Ascending aorta (tissue), 2 donors: ENCODE measurements at regions of chr19 and their contacts with region 1.

Region 1: DNA sequence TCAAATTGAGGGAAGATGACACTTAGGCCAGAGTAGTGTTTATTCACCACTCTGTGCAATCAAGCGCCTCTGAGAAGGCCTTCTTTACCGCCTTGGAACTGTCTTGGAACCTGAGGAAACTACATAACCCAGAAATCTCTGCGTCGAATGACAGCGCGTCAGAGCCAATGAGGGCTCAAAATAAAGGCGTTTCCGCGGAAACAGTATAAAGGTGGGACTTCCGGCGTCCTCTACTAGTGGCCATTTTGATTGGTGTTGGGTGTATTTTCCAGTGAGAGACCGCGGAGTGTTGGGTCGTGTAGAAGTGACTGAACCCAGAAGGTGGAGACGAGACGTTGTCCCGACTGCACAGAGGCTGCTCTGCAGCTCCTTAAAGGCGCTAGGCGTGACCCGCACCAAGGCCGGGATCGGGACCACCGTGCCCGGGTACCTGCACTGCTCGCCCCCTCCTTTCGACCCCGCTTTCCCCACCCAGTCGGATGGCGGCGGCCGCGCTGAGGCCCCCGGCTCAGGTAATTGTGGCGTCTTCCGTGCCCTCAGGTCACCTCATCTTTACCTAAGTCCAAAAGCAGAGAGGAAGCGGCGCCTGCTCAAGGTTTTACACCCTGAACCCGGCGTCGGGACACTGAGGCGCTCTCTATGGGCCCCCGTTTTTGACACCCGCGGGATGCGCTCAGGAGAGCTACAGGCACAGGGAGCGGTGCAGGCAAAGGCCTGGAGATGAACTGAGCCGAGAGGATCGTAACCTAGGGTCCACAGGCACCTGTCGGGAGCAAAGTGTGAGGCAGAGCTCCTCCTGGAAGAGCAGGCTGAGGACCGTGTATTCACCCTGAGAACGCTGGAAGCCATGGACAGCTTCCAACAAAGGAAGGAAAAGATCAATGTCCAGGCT is at the start of gene ZNF776:
- DNase-seq: peak; percentile 43 to 89
- H3K4me3 ChIP-seq: peak within 1 kb of the TSS; percentile 81 to 85
- H3K27ac ChIP-seq: peak within 1 kb of the TSS; percentile 55 to 63
- H3K4me1 ChIP-seq: no peaks in the 10 kb centered on the region
- H3K27me3 ChIP-seq: no peaks in the 10 kb centered on the region
- CTCF ChIP-seq: no peak
- total RNA-seq, gene ZNF776: 1.9 TPM

Region 2: GRCh38 chr19:57682226-57682766 is 64.5 kb before region 1 on chr19:
- intact Hi-C with region 1: loop called (anchors 5 kb)
- DNase-seq: no peak
- H3K4me3 ChIP-seq: peak overlapping the region; percentile 90 to 93
- H3K27ac ChIP-seq: no peak overlapping the region
- H3K4me1 ChIP-seq: peaks cover 6 to 14% of the 10 kb centered on the region in 2 donors
- H3K27me3 ChIP-seq: no peaks in the 10 kb centered on the region
- CTCF ChIP-seq: no peak

Region 3: GRCh38 chr19:57789288-57789687 is 42.5 kb after region 1 on chr19:
- intact Hi-C with region 1: no loop called
- DNase-seq: no peak
- H3K4me3 ChIP-seq: no peak overlapping the region
- H3K27ac ChIP-seq: no peak overlapping the region
- H3K4me1 ChIP-seq: no peaks in the 10 kb centered on the region
- H3K27me3 ChIP-seq: no peaks in the 10 kb centered on the region
- CTCF ChIP-seq: no peak

Region 4: GRCh38 chr19:57814505-57815251 is 67.9 kb after region 1 on chr19 and contains the start of gene ZNF552:
- intact Hi-C with region 1: loop called (anchors 5 kb)
- DNase-seq: peak; percentile 70 to 93
- H3K4me3 ChIP-seq: peak within 1 kb of the TSS; percentile 85 to 87
- H3K27ac ChIP-seq: peak within 1 kb of the TSS; percentile 71 to 75
- H3K4me1 ChIP-seq: peaks cover 2 to 8% of the 10 kb centered on the region in 2 donors
- H3K27me3 ChIP-seq: no peaks in the 10 kb centered on the region
- CTCF ChIP-seq: no peak
- total RNA-seq, gene ZNF552: 6.9 TPM

Region 5: GRCh38 chr19:58009666-58010371 is 263.0 kb after region 1 on chr19:
- intact Hi-C with region 1: no loop called
- DNase-seq: peak in 1 of 2 donors; percentile 83
- H3K4me3 ChIP-seq: peak overlapping the region; percentile 26 to 36
- H3K27ac ChIP-seq: no peak overlapping the region
- H3K4me1 ChIP-seq: no peaks in the 10 kb centered on the region
- H3K27me3 ChIP-seq: no peaks in the 10 kb centered on the region
- CTCF ChIP-seq: no peak

Region 6: DNA sequence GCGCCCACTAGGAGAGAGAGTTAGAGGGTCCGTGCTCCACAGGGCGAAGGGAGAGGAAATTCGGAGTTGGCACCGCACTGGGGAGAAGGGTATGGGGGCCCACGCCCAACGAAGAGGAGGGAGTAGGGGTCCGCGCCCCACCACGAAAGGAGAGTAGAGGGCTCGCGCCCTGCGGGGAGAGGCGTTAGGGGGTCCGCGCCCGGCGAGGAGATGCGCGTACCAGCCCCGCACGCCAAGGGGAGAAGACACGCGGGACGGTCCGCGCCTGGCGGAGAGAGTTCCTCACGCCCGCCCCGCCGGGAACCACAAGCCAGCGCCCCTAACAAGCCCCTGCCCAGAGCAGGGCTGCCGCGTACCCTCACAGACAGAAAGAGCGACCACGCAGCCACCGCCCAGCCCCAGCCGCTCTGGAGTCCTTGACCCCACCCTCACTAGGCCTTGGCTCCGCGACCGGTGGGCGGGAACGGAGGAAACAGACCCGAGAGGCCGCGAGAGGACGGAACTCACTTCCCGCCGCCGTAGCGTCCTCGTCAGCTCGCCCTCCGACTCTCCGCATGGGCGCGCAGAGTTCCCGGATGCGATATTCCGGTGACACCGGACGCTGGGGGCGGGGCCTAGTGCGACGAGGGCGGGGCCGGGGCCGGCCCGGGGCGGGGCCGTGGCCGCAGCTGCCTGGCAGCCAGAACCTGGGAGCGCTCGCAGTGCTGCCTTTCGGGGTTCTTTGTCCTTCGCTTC is 371.2 kb after region 1 on chr19:
- intact Hi-C with region 1: no loop called
- DNase-seq: no peak
- H3K4me3 ChIP-seq: no peak overlapping the region
- H3K27ac ChIP-seq: no peak overlapping the region
- H3K4me1 ChIP-seq: no peaks in the 10 kb centered on the region
- H3K27me3 ChIP-seq: no peaks in the 10 kb centered on the region
- CTCF ChIP-seq: no peak